Activated CD4-positive, alpha-beta memory T cell treated with anti-CD3 and anti-CD28 coated beads, Interleukin-2, amount 10 ng/mL, durations not matched to agents 7 days and 5 days (primary cell): ENCODE measurements at regions of chr9 and their contacts with region 1.

Region 1: GRCh38 chr9:34637356-34638137 is at the start of gene SIGMAR1:
- DNase-seq: peak; percentile 93
- H3K4me3 Mint-ChIP-seq: peak within 1 kb of the TSS; percentile 88
- H3K27ac Mint-ChIP-seq: peak within 1 kb of the TSS; percentile 82
- H3K4me1 Mint-ChIP-seq: peaks cover 42% of the 10 kb centered on the region
- H3K27me3 Mint-ChIP-seq: no peaks in the 10 kb centered on the region
- total RNA-seq, gene SIGMAR1: 53.3 to 55.5 TPM

Region 2: DNA sequence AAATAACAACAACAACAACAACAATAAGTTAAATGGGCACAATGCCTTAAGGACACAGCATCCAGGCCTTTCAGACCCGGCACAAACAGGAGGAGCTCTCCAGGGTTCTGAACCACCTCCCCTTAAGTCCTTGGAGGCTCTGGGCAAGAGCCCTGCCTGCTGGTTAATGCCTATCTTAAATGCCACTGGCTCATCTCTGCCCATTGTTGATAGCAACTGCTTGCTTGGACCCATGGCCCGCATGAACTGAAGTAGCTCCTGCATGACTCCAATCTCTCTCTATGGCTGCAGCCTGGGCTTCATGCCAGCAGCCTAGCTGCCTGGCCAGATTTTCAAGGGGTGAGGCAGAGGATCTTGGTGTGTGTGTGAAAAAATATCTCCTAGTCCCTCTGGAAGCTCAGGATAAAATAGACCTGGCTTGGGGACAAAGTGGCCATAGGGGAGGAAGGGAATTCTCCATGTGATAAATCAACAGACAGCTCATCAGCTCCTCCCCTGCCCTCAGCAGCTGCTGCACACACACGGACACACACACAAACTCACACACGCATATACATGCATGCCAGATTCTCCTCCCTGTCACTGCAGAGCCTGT is 206.6 kb before region 1 on chr9:
- CTCF ChIA-PET with region 1: no interaction called
- POLR2A ChIA-PET with region 1: no interaction called
- DNase-seq: peak; percentile 39
- H3K4me3 Mint-ChIP-seq: no peak overlapping the region
- H3K27ac Mint-ChIP-seq: no peak overlapping the region
- H3K4me1 Mint-ChIP-seq: no peaks in the 10 kb centered on the region
- H3K27me3 Mint-ChIP-seq: no peaks in the 10 kb centered on the region

Region 3: GRCh38 chr9:34603610-34604231 is 33.8 kb before region 1 on chr9:
- CTCF ChIA-PET with region 1: interaction called, 13 read pairs
- POLR2A ChIA-PET with region 1: no interaction called
- DNase-seq: peak; percentile 82
- H3K4me3 Mint-ChIP-seq: no peak overlapping the region
- H3K27ac Mint-ChIP-seq: no peak overlapping the region
- H3K4me1 Mint-ChIP-seq: no peaks in the 10 kb centered on the region
- H3K27me3 Mint-ChIP-seq: peaks cover 22% of the 10 kb centered on the region

Region 4: DNA sequence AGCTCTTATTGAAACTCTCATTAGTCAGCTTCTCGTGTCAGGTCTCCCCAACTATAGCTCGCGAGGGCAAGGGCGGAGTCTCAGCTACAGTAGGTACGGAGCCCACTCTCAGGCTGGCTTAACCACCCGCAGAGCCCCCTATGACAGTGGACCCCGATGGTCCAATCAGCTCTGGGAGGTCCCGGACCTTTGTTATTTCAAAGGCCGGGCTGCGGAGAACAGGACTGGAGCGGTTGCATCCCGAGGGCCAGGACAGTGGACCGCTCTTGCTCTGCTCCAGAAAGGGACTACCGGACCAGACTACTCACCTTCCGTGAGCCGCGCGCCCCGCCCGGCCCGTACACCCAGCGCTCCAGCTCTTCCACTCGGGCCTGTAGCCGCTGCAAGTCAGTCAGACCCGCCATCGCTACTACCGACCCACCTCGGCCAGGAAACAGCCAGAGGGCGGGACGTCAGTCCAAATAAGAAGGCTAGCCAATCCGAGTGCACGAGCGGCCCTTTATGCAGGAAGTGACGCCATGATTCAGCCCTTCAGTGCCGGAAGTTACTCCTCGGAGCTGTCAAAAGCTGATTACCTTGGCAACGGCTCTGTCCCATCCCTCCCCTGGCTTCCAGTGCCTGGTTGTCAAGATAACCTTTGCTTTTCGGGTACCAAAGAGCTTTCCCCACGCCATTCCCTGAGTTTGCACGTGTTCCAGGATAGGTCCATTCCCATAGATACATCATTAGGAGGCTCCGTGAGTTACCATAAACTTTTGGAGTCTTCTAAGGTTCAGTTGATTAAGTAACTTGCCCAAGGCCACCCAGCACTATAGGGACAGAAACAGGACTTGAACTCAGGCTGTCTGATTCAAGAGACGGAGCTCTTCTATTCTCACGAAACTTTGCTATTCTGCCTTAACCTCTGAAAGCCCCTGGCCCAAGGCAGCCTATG is 17.2 kb before region 1 on chr9 and contains the start of gene DCTN3:
- CTCF ChIA-PET with region 1: interaction called, 125 read pairs
- POLR2A ChIA-PET with region 1: interaction called, 96 read pairs
- DNase-seq: peak; percentile 94
- H3K4me3 Mint-ChIP-seq: peak within 1 kb of the TSS; percentile 86
- H3K27ac Mint-ChIP-seq: peak within 1 kb of the TSS; percentile 75
- H3K4me1 Mint-ChIP-seq: peaks cover 33% of the 10 kb centered on the region
- H3K27me3 Mint-ChIP-seq: peaks cover 28% of the 10 kb centered on the region
- total RNA-seq, gene DCTN3: 143 to 144 TPM

Region 5: GRCh38 chr9:34659592-34660535 is 22.3 kb after region 1 on chr9:
- CTCF ChIA-PET with region 1: interaction called, 83 read pairs
- POLR2A ChIA-PET with region 1: interaction called, 162 read pairs
- DNase-seq: no peak
- H3K4me3 Mint-ChIP-seq: no peak overlapping the region
- H3K27ac Mint-ChIP-seq: no peak overlapping the region
- H3K4me1 Mint-ChIP-seq: peaks cover 34% of the 10 kb centered on the region
- H3K27me3 Mint-ChIP-seq: no peaks in the 10 kb centered on the region

Region 6: DNA sequence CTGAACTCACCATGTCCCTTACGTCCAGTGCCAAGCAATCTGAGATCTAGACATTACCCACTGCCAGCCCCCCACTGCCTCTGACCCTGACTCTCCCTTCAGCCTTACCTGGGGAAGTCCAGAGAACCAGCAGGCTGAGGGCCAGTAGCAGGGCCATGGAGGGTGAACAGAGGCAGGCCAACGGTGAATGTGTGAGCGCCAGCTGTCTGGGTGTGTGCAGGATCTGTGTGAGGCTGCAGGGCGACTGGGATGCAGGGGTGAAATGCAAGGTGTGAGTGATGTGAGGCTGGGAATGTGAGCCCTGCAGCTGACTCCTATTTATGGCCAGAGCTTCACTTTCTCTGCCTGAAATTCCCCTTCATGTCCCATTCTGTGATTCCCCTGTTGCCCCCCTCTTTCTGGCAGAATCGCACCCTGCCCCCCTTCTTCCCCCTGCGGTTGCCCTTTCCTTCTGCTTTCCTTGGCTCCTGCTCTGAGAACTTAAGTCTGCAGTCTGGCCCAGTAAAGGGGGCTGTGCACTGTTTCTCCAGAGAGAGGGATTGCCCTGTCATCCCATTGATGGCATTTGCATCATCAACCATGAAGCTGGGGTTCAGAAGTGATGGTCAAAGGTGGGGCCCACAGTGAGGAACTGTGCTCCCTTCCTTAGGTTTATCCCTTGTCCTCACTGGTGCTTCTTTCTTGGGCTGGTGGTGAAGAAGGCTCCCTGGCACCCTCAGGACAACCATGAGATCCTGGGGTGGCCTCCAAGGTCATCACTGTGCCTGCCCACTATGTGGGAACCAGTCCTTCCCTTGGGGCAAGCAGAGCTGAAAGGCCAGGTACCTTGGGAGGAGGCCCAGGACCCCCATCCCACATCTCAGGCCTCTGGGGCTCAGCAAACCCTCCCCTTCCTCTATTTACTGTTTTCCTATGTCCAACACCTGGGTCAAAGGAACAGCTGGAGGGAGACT is 53.7 kb after region 1 on chr9 and contains the start of gene CCL19:
- CTCF ChIA-PET with region 1: no interaction called
- POLR2A ChIA-PET with region 1: no interaction called
- DNase-seq: no peak
- H3K4me3 Mint-ChIP-seq: no peak within 1 kb of the TSS
- H3K27ac Mint-ChIP-seq: no peak within 1 kb of the TSS
- H3K4me1 Mint-ChIP-seq: no peaks in the 10 kb centered on the region
- H3K27me3 Mint-ChIP-seq: no peaks in the 10 kb centered on the region
- total RNA-seq, gene CCL19: not detected

Region 7: GRCh38 chr9:34701769-34702736 is 64.5 kb after region 1 on chr9:
- CTCF ChIA-PET with region 1: interaction called, 12 read pairs
- POLR2A ChIA-PET with region 1: no interaction called
- DNase-seq: peak; percentile 79
- H3K4me3 Mint-ChIP-seq: peak overlapping the region; percentile 62
- H3K27ac Mint-ChIP-seq: no peak overlapping the region
- H3K4me1 Mint-ChIP-seq: peaks cover 9% of the 10 kb centered on the region
- H3K27me3 Mint-ChIP-seq: peaks cover 19% of the 10 kb centered on the region